ENCODE measurements at regions of chr14 and their contacts with region 1.

Region 1: DNA sequence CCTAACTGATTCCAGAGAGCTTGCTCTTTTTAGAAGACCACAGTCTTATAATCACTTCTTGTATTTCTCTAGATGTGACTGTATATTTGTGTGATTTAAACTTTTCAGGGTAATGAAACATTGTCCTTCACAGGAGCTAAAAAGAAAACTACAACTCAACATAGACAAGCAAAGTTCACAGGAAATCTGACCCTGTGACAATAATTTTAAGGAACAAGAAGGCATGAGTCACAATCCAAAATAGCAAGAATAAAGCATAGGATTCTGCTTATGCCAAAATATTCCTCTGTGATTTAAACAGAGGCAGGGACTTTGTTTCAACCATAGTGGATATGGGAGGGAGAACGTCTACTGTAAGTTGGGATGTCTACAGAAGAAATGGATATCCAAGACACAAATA is 44.3 kb downstream of the GPR65 start:
- DNase-seq: no peak
- ATAC-seq: no peak
- H3K4me3 Mint-ChIP-seq: no peak overlapping the region
- H3K27ac Mint-ChIP-seq: no peak overlapping the region
- H3K4me1 Mint-ChIP-seq: no peaks in the 10 kb centered on the region
- H3K27me3 Mint-ChIP-seq: peaks cover 3% of the 10 kb centered on the region
- CTCF ChIP-seq: no peak

Region 2: DNA sequence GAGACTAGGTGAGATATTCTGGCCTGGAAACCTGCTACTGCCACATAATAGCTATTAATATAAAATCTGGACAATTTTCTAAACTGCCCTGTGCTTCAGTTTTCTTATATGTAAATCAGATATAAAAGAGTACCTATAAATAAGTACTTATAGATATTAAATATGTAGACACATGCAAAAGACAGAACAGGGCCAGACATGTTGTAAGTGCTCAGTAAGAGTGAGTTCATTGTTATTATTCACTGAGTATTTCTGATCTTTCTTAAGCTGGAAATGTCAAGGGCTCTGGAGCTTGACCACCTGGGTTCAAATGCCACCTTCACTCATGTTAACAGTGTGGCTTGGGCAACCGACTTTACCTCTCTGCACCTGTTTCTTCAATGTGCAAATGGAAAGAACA is 236.1 kb before region 1 on chr14:
- CTCF ChIA-PET with region 1: no interaction called
- POLR2A ChIA-PET with region 1: no interaction called
- intact Hi-C with region 1: no loop called
- DNase-seq: no peak
- ATAC-seq: no peak
- H3K4me3 Mint-ChIP-seq: no peak overlapping the region
- H3K27ac Mint-ChIP-seq: no peak overlapping the region
- H3K4me1 Mint-ChIP-seq: no peaks in the 10 kb centered on the region
- H3K27me3 Mint-ChIP-seq: no peaks in the 10 kb centered on the region
- CTCF ChIP-seq: no peak

Region 3: GRCh38 chr14:88026890-88027289 is 22.4 kb before region 1 on chr14:
- CTCF ChIA-PET with region 1: no interaction called
- POLR2A ChIA-PET with region 1: no interaction called
- intact Hi-C with region 1: no loop called
- DNase-seq: no peak
- ATAC-seq: no peak
- H3K4me3 Mint-ChIP-seq: no peak overlapping the region
- H3K27ac Mint-ChIP-seq: no peak overlapping the region
- H3K4me1 Mint-ChIP-seq: peaks cover 36% of the 10 kb centered on the region
- H3K27me3 Mint-ChIP-seq: no peaks in the 10 kb centered on the region
- CTCF ChIP-seq: no peak

Region 4: GRCh38 chr14:88554457-88555286 is 505.4 kb after region 1 on chr14 and contains the start of gene PTPN21:
- CTCF ChIA-PET with region 1: no interaction called
- POLR2A ChIA-PET with region 1: interaction called, 12 read pairs
- intact Hi-C with region 1: no loop called
- DNase-seq: peak; percentile 27
- ATAC-seq: peak; percentile 56
- H3K4me3 Mint-ChIP-seq: peak within 1 kb of the TSS; percentile 80
- H3K27ac Mint-ChIP-seq: no peak within 1 kb of the TSS
- H3K4me1 Mint-ChIP-seq: peaks cover 16% of the 10 kb centered on the region
- H3K27me3 Mint-ChIP-seq: peaks cover 43% of the 10 kb centered on the region
- CTCF ChIP-seq: no peak
- total RNA-seq, gene PTPN21: 0.10 and 0.31 TPM in 2 replicates